Right ventricle myocardium superior (tissue), 1 donor: ENCODE measurements at regions of chr5 and their contacts with region 1.

Region 1: DNA sequence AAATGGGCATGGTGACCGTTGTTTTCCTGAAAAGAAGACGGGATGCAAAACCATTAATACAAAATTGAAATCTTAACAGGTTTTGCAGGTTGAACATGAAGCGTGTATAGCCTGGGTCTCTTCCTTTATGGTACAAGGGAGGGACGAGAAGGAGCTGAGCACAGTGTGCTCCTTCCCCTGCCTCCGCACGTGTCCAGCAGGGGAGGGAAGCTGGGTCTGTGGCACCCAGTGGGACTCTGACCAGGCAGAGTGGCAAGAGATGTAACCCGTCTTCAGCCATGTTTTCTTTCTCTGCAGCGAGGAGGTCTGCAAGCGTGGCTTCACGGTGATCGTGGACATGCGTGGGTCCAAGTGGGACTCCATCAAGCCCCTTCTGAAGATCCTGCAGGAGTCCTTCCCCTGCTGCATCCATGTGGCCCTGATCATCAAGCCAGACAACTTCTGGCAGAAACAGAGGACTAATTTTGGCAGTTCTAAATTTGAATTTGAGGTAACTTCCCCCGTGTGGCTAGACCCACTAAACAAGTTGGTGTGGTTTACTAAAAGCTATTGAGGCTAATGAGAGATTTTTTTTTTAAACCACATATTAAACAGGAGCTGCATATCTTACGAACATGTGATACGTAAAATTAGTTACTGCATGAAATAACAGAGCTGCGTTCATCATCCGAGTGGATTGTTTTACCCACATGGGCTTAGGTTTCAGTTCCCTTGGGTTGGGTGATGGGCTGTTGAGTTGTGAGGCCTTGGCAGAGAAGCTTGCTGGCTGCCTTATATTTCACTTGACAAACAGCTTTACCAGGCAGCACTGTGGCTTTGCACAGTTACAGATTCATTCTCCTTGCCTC is 143.7 kb downstream of the TRIO start:
- DNase-seq: no peak
- ATAC-seq: peak; percentile 51

Region 2: DNA sequence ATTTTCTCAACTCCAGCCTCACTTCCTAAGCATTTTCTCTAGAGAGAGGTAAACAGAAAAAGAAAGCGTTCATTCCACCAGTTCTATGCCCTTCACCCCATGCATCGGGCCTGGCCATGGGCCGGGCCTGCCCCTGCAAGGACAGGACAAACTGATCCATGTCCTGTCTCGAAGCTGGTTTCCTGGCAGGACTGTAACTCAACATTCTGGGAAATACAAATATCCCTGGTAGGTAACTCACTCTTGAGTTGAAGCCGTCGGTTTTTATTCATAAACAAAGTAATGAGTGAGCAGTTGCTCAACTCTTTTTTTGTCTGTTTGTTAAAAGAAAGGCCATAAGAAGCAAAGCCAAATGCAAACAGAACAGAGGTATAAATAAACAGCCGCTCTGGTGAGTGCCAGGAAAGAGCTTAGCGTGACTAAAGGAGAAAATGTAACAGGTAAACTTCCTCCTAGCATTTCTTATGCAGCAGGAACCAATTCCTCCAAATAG is 277.9 kb before region 1 on chr5:
- intact Hi-C with region 1: loop called (anchors 10 kb)
- DNase-seq: no peak
- ATAC-seq: no peak